ENCODE measurements at regions of chr14 and their contacts with region 1.

Region 1: DNA sequence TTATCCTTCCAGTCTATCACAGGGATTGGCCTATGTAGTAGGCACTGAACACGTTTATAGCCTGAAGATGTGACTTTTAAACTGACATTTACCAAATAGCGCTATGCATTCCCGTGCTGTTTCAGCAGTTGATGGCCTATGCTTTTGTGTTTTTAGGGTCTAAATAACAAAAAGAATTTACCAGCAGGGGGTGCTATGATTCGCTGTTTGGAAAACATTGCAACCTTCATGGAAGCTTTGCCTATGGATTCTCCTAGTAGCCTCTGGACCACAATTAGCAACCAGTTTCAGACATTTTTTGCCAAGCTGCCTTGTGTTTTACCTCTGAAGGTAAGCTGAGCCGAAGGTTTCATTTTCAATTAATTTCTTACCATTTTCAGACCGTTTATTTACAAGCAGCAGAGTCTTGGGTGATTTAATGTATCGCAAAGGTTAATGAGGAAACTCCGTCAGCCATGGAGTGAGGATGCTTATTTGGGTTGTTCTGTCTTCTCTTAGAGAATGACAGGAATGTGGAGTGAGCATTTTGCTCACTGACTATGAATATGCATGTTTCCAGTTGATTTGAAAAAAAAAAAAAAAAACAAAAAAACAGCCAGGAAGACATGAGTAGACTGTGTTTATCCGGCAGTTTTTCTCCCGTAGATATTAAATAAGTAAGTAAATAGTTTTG is 133.1 kb downstream of the PRIMA1 start:
- DNase-seq: no peak
- ATAC-seq: peak; percentile 55
- H3K4me3 ChIP-seq: no peak overlapping the region
- H3K27ac ChIP-seq: no peak overlapping the region
- H3K4me1 ChIP-seq: no peaks in the 10 kb centered on the region
- H3K27me3 ChIP-seq: peaks cover 8% of the 10 kb centered on the region
- CTCF ChIP-seq: peak; percentile 52

Region 2: GRCh38 chr14:93023039-93023438 is 632.2 kb before region 1 on chr14:
- intact Hi-C with region 1: no loop called
- DNase-seq: no peak
- ATAC-seq: peak; percentile 57
- H3K4me3 ChIP-seq: no peak overlapping the region
- H3K27ac ChIP-seq: no peak overlapping the region
- H3K4me1 ChIP-seq: no peaks in the 10 kb centered on the region
- H3K27me3 ChIP-seq: no peaks in the 10 kb centered on the region
- CTCF ChIP-seq: no peak

Region 3: DNA sequence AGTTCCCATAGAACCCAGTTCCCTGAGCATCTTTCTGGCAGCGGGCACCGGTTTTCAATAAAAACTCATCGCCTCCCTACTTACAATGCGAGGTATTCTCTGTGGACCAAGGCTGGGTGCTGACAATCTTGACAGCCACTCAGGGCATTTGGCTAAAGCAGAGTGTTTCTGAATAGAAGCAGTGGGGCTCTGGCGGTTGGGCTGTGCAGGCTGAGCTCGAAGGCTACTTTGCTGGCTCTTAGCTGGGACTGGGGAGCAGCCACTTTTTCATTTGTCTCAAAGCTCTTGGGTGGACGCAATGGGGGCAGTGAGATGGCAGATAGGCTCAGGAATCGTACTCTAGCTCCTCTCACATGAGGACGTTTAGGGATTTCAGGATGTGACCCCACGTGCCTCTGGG is 72.7 kb before region 1 on chr14:
- intact Hi-C with region 1: no loop called
- DNase-seq: no peak
- ATAC-seq: no peak
- H3K4me3 ChIP-seq: no peak overlapping the region
- H3K27ac ChIP-seq: no peak overlapping the region
- H3K4me1 ChIP-seq: no peaks in the 10 kb centered on the region
- H3K27me3 ChIP-seq: no peaks in the 10 kb centered on the region
- CTCF ChIP-seq: no peak

Region 4: DNA sequence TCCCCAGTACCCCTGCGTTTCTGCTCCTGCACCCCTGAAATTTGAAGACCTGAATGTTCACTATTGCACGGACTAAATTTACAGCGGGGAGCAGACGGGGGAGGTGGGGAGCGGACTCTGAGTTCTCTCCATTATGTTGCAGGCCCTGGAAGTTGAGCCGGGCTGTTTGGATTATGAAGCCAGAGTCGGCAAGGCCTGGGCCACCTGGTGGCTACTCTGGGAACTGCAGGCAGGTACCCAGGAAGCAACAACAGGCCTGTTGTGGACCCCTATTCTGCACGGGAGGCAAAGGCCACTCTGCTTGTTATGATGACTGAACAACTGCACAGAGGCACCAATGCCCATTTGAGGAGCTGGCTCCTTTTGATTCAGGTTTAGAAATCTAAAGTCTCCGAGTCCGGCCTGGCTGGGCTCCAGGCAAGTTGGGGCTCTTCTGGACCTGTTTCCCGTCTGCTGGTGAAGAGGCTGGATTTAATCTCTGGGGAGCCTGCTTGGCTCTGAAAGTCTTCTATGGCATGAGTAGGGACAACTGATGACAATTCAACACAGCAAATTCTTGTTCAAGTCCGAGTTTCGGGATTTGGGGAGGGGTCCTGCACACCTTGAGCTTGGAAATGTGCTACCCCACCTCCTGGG is 237.8 kb after region 1 on chr14:
- intact Hi-C with region 1: loop called (anchors 10 kb)
- DNase-seq: peak; percentile 85
- ATAC-seq: peak; percentile 85
- H3K4me3 ChIP-seq: no peak overlapping the region
- H3K27ac ChIP-seq: no peak overlapping the region
- H3K4me1 ChIP-seq: no peaks in the 10 kb centered on the region
- H3K27me3 ChIP-seq: no peaks in the 10 kb centered on the region
- CTCF ChIP-seq: peak; percentile 99